GM12878 (cell line): ENCODE measurements at regions of chr2 and their contacts with region 1.

Region 1: DNA sequence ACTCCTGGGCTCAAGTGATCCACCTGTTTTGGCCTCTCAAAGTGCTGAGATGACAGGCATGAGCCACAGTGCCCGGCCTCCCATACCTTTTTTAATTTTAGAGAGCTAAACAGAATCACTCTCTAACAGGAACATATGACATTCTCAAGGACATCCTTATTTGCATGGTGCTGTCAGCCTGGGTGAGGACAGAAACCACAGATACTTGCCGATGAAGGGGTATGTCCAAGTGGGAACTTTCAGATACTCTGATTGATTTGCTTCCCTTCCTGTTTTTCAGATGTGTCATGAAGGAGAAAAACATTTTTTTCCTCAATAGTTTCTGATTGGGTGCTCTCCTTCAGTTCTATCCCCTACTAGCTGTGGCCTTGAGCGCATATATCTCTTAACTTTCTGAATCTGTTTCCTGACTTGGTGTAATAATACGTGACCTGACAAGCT is 49.6 kb downstream of the MYO3B start:
- DNase-seq: peak; percentile 79
- ATAC-seq: peak; percentile 91
- H3K4me3 ChIP-seq: no peak overlapping the region
- H3K27ac ChIP-seq: peak overlapping the region; percentile 52
- H3K4me1 ChIP-seq: peaks cover 19% of the 10 kb centered on the region
- H3K27me3 ChIP-seq: no peaks in the 10 kb centered on the region
- CTCF ChIP-seq: no peak
- EP300 ChIP-seq: 0 out of 4 replicates have a peak, but pooled peaks of 1 of the 2 experiments have one; percentile 46
- POLR2A ChIP-seq: no peak
- RAD21 ChIP-seq: no peak

Region 2: GRCh38 chr2:170139276-170139967 is 88.1 kb before region 1 on chr2:
- CTCF ChIA-PET with region 1: no interaction called
- POLR2A ChIA-PET with region 1: no interaction called
- RAD21 ChIA-PET with region 1: interaction called, 12 read pairs
- SMC1A ChIA-PET with region 1: interaction called, 3 read pairs
- in situ Hi-C with region 1: no loop called
- intact Hi-C with region 1: no loop called
- DNase-seq: no peak
- ATAC-seq: peak; percentile 83
- H3K4me3 ChIP-seq: no peak overlapping the region
- H3K27ac ChIP-seq: no peak overlapping the region
- H3K4me1 ChIP-seq: peaks cover 25% of the 10 kb centered on the region
- H3K27me3 ChIP-seq: no peaks in the 10 kb centered on the region
- CTCF ChIP-seq: no peak
- EP300 ChIP-seq: no peak
- POLR2A ChIP-seq: no peak
- RAD21 ChIP-seq: no peak

Region 3: DNA sequence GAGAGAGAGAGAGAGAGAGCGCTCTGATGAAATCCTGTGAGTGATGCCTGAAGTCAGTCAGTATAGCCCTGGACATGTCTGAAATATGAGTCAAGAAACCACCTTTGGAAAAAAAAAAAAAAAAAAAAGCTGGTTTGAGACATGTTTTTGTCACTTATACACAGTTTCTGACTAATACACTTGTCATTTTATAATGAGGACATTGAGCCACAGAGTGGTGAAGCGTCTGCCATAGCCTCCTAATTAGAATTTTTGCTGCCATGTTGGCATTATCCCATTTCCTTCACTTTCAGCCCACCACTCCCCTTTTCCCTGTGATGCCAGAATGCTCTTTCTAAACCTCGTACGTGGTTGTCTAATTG is 65.3 kb before region 1 on chr2:
- CTCF ChIA-PET with region 1: interaction called, 4 read pairs
- POLR2A ChIA-PET with region 1: interaction called, 5 read pairs
- RAD21 ChIA-PET with region 1: interaction called, 10 read pairs
- SMC1A ChIA-PET with region 1: interaction called, 29 read pairs
- in situ Hi-C with region 1: no loop called
- intact Hi-C with region 1: loop called (anchors 5 kb)
- DNase-seq: no peak
- ATAC-seq: no peak
- H3K4me3 ChIP-seq: no peak overlapping the region
- H3K27ac ChIP-seq: no peak overlapping the region
- H3K4me1 ChIP-seq: peaks cover 36% of the 10 kb centered on the region
- H3K27me3 ChIP-seq: no peaks in the 10 kb centered on the region
- CTCF ChIP-seq: no peak
- EP300 ChIP-seq: no peak
- POLR2A ChIP-seq: no peak
- RAD21 ChIP-seq: no peak

Region 4: DNA sequence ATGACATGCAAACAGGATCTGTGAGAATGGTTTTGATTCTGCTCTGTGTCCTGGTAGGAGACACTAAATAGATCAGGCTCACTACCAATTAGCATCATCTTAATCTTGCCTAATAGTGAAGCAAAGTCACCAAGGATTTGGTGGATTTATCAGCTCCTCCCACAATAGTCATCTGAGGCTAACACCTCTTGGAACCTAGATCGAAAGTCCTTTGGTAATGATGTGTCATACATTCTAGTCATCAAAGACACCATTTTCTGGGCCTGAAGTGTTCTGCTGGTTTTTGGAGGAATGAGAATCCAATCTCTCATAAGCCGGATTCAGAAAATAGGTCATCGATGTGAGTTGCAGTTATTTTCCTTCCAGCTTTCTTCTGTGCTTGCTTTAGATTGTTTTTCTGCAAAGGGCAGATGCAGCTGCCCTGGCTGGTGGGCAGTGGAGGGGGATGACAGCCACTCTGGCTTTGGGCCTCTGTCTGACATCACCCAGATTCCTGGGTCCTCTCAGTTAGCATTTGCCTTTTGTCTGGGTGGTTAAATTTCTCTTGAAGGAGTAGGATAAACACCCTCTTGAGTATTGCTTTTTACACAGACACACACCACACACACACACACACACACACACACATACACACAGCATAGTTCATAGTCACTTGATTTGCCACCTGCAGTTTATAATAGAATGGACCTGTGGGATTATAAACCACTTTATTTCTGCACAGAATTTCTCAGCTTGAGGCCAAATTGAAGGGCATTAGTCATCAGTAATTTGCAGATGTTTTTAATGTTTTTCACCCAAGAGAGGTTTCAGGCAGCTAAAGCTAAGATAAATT is 49.4 kb before region 1 on chr2 and contains the start of gene MYO3B:
- CTCF ChIA-PET with region 1: interaction called, 3 read pairs
- POLR2A ChIA-PET with region 1: interaction called, 5 read pairs
- RAD21 ChIA-PET with region 1: interaction called, 8 read pairs
- SMC1A ChIA-PET with region 1: interaction called, 40 read pairs
- in situ Hi-C with region 1: no loop called
- intact Hi-C with region 1: no loop called
- DNase-seq: no peak
- ATAC-seq: peak; percentile 69
- H3K4me3 ChIP-seq: peak within 1 kb of the TSS; percentile 13; the same call in 1 of the 2 replicates
- H3K27ac ChIP-seq: peak within 1 kb of the TSS; percentile 80
- H3K4me1 ChIP-seq: peaks cover 38% of the 10 kb centered on the region
- H3K27me3 ChIP-seq: no peaks in the 10 kb centered on the region
- CTCF ChIP-seq: no peak
- EP300 ChIP-seq: peak; percentile 33 to 55; a peak in 2 of 4 replicates
- POLR2A ChIP-seq: no peak
- RAD21 ChIP-seq: no peak
- polyA plus RNA-seq, gene MYO3B: 1.1 to 1.2 TPM

Region 5: DNA sequence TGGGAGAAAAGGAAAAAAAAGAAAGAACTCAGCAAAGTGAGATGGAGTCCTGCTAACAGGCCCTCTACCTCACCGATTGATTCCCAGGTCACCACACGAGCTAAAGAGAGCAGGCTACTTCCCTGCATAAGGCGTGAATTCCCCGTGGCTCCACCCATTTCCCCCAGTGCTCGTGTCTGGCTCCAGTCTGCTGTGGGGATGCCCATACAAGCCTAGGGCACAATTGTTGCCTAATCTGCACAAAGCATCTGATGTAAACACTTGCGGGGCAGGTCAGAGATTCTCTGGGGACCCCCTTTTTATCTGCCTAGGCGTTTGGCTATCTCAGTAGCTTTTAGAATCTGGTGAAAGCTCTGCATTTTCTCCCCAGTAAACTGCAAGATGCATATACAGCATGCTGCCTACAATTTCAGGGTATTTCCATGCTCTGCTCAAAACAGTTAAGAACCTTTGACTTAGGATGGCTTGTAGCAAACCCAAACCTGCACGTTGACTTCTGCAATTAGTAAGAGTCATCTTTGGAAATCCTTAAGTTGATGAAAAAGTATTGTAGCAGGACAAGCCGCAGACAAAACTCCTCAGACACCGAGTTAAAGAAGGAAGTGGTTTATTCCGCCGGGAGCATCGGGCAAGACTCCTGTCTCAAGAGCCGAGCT is 14.8 kb before region 1 on chr2:
- CTCF ChIA-PET with region 1: interaction called, 6 read pairs
- POLR2A ChIA-PET with region 1: interaction called, 8 read pairs
- RAD21 ChIA-PET with region 1: interaction called, 20 read pairs
- SMC1A ChIA-PET with region 1: interaction called, 40 read pairs
- in situ Hi-C with region 1: no loop called
- intact Hi-C with region 1: no loop called
- DNase-seq: peak; percentile 64
- ATAC-seq: peak; percentile 72
- H3K4me3 ChIP-seq: peak overlapping the region; percentile 42
- H3K27ac ChIP-seq: peak overlapping the region; percentile 51
- H3K4me1 ChIP-seq: peaks cover 24% of the 10 kb centered on the region
- H3K27me3 ChIP-seq: no peaks in the 10 kb centered on the region
- CTCF ChIP-seq: no peak
- EP300 ChIP-seq: no peak
- POLR2A ChIP-seq: no peak
- RAD21 ChIP-seq: no peak

Region 6: GRCh38 chr2:170241756-170242155 is 14.2 kb after region 1 on chr2:
- CTCF ChIA-PET with region 1: interaction called, 13 read pairs
- POLR2A ChIA-PET with region 1: interaction called, 6 read pairs
- RAD21 ChIA-PET with region 1: interaction called, 10 read pairs
- SMC1A ChIA-PET with region 1: interaction called, 8 read pairs
- in situ Hi-C with region 1: no loop called
- intact Hi-C with region 1: no loop called
- DNase-seq: no peak
- ATAC-seq: no peak
- H3K4me3 ChIP-seq: no peak overlapping the region
- H3K27ac ChIP-seq: no peak overlapping the region
- H3K4me1 ChIP-seq: no peaks in the 10 kb centered on the region
- H3K27me3 ChIP-seq: no peaks in the 10 kb centered on the region
- CTCF ChIP-seq: no peak
- EP300 ChIP-seq: no peak
- POLR2A ChIP-seq: no peak
- RAD21 ChIP-seq: no peak

Region 7: DNA sequence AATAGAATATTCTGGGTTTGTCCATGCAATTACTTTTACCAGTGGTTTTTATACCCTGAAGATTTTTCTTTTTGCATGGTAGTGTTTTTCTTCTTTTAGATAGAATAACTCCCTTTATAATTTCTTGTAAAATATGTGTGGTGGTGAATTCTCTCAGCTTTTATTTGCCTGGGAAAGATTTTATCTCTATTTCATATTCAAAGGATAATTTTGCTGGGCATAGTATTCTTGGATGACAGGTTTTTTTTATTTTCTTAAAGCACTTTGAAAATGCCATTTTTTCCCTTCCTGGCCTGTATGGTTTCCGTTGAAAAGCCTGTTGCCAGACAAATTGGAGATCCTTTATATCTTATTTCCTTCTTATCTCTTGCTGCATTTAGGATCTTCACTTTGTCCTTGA is 63.9 kb after region 1 on chr2:
- CTCF ChIA-PET with region 1: no interaction called
- POLR2A ChIA-PET with region 1: no interaction called
- RAD21 ChIA-PET with region 1: no interaction called
- SMC1A ChIA-PET with region 1: no interaction called
- in situ Hi-C with region 1: no loop called
- intact Hi-C with region 1: no loop called
- DNase-seq: no peak
- ATAC-seq: no peak
- H3K4me3 ChIP-seq: no peak overlapping the region
- H3K27ac ChIP-seq: no peak overlapping the region
- H3K4me1 ChIP-seq: no peaks in the 10 kb centered on the region
- H3K27me3 ChIP-seq: no peaks in the 10 kb centered on the region
- CTCF ChIP-seq: no peak
- EP300 ChIP-seq: no peak
- POLR2A ChIP-seq: no peak
- RAD21 ChIP-seq: no peak